ENCODE measurements at regions of chr17 and their contacts with region 1.

Region 1: DNA sequence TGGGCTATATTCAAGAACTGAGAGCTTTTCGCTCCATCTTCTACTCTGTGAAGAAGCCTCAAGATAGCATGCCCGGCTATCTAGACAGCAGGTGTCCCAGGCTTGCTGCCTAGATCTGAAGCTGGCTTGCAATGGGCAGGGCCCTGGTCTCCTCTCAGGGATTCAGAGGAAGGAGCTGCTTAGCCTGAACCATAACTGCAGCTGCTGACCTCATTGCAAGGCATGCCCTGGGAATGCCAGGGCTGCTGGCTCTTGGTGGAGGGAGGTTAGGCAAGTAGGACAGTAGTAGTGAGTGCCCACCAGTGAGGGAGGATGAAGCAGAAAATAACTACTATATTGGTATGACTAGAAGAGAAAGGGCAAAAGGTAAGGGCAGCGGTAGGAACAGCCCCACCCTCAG is 21.3 kb upstream of the SLC35B1 start:
- DNase-seq: no peak
- ATAC-seq: no peak

Region 2: DNA sequence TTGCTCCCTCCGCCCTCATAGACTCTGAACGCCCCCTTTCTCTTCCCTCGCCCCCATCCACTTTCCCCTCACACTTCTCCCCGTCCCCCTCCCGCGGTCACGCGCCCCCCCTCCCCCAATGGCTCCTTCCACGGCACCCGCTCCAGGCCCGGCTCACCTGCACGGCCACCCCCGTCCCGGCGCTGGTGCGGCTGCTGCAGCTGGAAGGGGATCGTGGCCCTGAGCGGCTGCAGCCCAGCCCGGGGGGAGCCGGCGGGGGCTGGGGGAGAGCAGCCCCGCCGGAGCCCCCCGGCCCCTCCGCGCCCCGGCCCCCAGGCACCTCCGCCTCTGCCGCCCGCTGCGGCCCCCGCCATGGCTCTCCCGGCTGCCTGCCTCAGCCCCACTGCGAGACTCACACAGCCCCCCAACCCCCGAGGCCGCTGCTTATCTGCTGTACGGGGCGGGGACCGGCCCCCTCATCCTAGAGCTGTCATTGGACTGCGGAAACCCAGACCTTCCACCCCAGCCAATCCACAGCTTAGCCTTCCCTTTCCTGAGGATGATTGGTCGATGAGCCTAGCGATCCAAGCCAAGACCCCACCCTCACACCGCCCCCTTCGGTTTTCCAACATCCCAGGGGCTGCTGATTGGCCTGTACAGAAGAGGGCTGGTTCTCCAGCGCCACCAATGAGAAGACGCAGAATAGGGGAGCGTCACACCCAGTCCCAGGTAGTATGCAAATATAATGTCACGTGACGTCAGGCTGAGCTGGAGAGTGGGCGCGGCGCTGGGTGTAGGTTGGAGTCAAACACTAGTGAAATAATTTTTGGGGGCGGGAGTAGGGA is 34.9 kb after region 1 on chr17 and contains the start of gene FAM117A:
- intact Hi-C with region 1: loop called (anchors 5 kb)
- DNase-seq: peak; percentile 95
- ATAC-seq: peak; percentile 98
- total RNA-seq, gene FAM117A: 10.3 TPM

Region 3: GRCh38 chr17:49845321-49845720 is 116.3 kb after region 1 on chr17:
- intact Hi-C with region 1: loop called (anchors 5 kb)
- DNase-seq: peak; percentile 71
- ATAC-seq: peak; percentile 88

Measured in Right ventricle myocardium inferior (tissue), 1 donor.